Esophagus muscularis mucosa (tissue), 4 donors: ENCODE measurements at regions of chr5 and their contacts with region 1.

Region 1: GRCh38 chr5:154179846-154180710 is 10.5 kb upstream of the GALNT10 start:
- DNase-seq: no peak
- H3K4me3 ChIP-seq: no peak overlapping the region
- H3K27ac ChIP-seq: no peak overlapping the region
- H3K4me1 ChIP-seq: peaks cover 0 to 17% (median 3%) of the 10 kb centered on the region in 4 donors
- H3K27me3 ChIP-seq: no peaks in the 10 kb centered on the region
- CTCF ChIP-seq: peak; percentile 71 to 85 (median 73)
- EP300 ChIP-seq: no peak
- POLR2A ChIP-seq: no peak

Region 2: DNA sequence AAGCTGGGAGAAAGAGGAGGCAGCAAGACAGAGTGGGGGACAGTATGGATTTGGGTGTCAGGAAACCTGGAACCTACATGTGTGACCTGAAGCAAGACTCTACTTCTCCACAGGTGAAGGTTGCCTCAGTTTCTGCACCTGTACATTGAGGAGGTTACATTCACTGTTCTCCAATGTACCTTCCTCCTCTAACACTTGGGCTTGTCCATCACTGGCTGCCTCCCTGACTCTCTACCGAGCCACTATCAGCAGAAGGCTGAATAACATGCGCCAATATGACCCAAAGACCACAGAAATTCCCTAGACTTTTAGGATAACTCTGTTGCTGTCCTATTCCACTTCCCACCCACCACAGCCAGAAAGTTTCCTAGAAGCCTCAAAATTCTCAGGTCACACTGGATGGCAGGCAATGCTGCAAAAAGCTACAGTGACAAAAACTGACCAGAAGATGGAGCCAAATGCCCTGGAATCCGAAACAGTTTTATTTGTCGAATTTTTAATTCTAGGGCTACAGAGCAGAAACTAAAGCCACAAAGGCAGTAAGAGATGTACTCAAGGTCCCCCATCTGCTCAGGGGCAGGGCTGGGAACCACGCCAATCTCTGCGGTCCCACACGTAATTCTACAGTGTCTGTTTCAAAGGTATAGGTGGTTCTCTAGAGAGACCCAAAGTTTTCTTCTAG is 205.8 kb before region 1 on chr5:
- intact Hi-C with region 1: loop called (anchors 5 kb)
- DNase-seq: peak; percentile 75
- H3K4me3 ChIP-seq: no peak overlapping the region
- H3K27ac ChIP-seq: no peak overlapping the region
- H3K4me1 ChIP-seq: no peaks in the 10 kb centered on the region
- H3K27me3 ChIP-seq: peaks cover 0 to 15% (median 0%) of the 10 kb centered on the region in 4 donors
- CTCF ChIP-seq: peak; percentile 51 to 67 (median 53)
- EP300 ChIP-seq: no peak
- POLR2A ChIP-seq: no peak

Region 3: GRCh38 chr5:154072414-154073171 is 107.5 kb before region 1 on chr5:
- intact Hi-C with region 1: loop called (anchors 1 kb)
- DNase-seq: peak; percentile 94
- H3K4me3 ChIP-seq: no peak overlapping the region
- H3K27ac ChIP-seq: no peak overlapping the region
- H3K4me1 ChIP-seq: peaks cover 10 to 15% (median 12%) of the 10 kb centered on the region in 4 donors
- H3K27me3 ChIP-seq: no peaks in the 10 kb centered on the region
- CTCF ChIP-seq: peak; percentile 89 to 94 (median 93)
- EP300 ChIP-seq: no peak
- POLR2A ChIP-seq: no peak

Region 4: DNA sequence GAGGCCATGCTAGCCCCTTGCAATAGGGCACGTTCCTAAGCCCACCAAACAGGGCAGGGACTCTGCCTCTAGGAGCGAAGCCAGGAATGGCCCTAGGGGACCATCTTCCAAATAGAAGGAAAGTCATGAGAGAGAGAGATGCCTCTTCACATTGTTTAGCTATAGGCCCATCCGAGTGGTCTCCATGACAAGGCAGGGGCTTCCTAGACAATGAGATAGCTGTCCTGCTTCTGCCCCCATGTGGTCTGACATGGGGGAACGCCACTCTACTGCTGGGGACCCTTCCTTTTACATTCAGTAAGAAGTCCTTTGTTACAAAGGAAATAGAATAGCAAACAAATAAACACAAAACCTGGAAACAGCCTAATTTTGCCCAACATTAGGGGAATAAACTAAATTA is 815.6 kb after region 1 on chr5:
- intact Hi-C with region 1: no loop called
- DNase-seq: no peak
- H3K4me3 ChIP-seq: no peak overlapping the region
- H3K27ac ChIP-seq: no peak overlapping the region
- H3K4me1 ChIP-seq: no peaks in the 10 kb centered on the region
- H3K27me3 ChIP-seq: peaks cover 0 to 4% (median 0%) of the 10 kb centered on the region in 4 donors
- CTCF ChIP-seq: no peak
- EP300 ChIP-seq: no peak
- POLR2A ChIP-seq: no peak